PC-9 (cell line): ENCODE measurements at regions of chr16 and their contacts with region 1.

Region 1: GRCh38 chr16:23362460-23363317 is 60.6 kb downstream of the SCNN1B start:
- DNase-seq: peak; percentile 89 to 93
- H3K4me3 ChIP-seq: no peak overlapping the region
- H3K27ac ChIP-seq: peak overlapping the region; percentile 74
- H3K4me1 ChIP-seq: peaks cover 62% of the 10 kb centered on the region
- H3K27me3 ChIP-seq: no peaks in the 10 kb centered on the region
- CTCF ChIP-seq: no peak

Region 2: DNA sequence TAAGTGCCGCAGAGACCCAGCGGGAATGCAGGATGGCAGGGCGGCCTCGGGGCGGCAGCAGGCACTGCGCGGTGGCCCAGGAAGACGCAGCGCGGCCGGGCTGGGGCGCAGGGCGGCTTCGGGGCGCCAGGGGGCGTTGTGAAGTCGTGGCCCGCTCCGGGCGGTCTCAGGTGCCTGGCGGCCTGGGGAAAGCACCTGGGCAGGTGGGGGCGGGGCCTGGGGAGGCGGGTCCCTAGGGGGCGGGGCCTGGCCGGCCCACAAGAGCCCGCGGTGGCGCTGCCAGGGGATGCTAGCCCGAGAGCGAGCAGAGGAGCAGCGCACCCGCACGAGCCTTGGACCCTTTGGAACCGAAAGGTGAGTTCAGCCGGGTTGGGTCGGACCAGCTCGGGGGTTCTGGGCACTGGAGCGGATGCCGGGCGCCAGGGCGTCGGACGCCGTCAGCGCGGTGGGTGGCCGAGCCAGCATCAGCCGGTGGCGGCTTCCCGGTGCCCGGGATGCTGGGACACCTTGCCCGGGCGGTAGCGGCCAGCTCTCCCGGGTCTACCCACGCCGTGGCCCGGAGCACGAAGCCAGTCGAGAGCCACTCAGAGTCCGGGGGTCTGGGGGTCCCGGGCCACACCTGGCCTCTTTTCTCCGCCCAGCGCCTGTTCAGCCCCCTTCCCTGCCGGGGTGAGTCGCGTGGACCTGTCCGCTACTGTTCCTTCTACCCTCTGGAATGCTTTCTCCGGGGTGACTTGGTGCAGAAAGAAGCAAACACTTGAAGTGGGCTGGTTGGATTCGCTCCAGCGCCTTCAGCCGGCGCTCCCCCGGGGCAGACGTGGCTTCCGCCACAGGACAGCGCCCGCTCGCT is 180.0 kb before region 1 on chr16 and contains the start of gene SCNN1G:
- CTCF ChIA-PET with region 1: interaction called, 21 read pairs
- POLR2A ChIA-PET with region 1: no interaction called
- intact Hi-C with region 1: loop called (anchors 5 kb)
- DNase-seq: peak; percentile 75 to 99
- H3K4me3 ChIP-seq: peak within 1 kb of the TSS; percentile 81
- H3K27ac ChIP-seq: no peak within 1 kb of the TSS
- H3K4me1 ChIP-seq: peaks cover 27% of the 10 kb centered on the region
- H3K27me3 ChIP-seq: no peaks in the 10 kb centered on the region
- CTCF ChIP-seq: peak; percentile 85
- total RNA-seq, gene SCNN1G: not detected in 2 replicates

Region 3: GRCh38 chr16:23339787-23340186 is 22.9 kb before region 1 on chr16:
- CTCF ChIA-PET with region 1: interaction called, 3 read pairs
- POLR2A ChIA-PET with region 1: no interaction called
- intact Hi-C with region 1: loop called (anchors 2 kb)
- DNase-seq: peak; percentile 36 to 96
- H3K4me3 ChIP-seq: 0 out of 2 replicates have a peak overlapping the region, but pooled peaks have one; percentile 10
- H3K27ac ChIP-seq: peak overlapping the region; percentile 81
- H3K4me1 ChIP-seq: peaks cover 51% of the 10 kb centered on the region
- H3K27me3 ChIP-seq: no peaks in the 10 kb centered on the region
- CTCF ChIP-seq: no peak